ENCODE measurements at regions of chr1 and their contacts with region 1.

Region 1: DNA sequence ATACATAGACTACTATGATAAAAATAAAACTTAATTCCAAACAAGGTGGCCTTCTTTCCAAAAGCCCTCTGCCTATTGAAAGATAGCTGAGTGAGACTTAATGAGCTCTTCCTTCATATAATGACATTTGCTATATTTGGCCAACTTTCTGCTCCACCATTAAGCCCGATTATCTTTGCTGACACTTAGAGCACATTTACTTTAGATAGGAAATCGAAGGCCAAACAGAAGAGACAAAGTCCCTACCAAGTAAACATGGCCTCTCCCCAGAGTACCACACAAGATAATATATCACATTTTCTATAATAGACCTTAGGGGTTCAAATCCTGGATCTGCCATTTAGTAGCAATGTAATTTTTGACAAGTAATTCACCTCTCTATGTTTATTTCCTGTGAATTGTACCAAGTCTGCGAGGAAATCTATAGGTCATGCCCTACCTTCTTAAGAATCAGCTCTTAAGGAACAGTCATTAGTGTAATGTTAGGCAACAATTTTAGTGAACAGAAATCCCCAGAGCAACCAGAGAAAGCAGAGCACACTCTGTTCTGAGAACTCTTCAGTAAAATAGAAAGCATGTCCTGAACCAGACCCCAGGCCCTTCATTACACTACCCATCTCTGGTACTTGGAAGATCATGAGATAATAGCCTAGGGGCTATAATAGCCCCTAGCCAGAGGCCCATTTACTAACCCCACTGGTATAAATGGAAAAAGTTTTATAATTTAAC is 17.3 kb upstream of the COA6 start:
- DNase-seq: no peak
- H3K4me3 Mint-ChIP-seq: peak overlapping the region; percentile 86
- H3K27ac Mint-ChIP-seq: peak overlapping the region; percentile 89
- H3K4me1 Mint-ChIP-seq: peaks cover 12% of the 10 kb centered on the region
- H3K27me3 Mint-ChIP-seq: no peaks in the 10 kb centered on the region
- CTCF ChIP-seq: no peak

Region 2: GRCh38 chr1:232813760-232814159 is 1542.2 kb before region 1 on chr1:
- CTCF ChIA-PET with region 1: no interaction called
- POLR2A ChIA-PET with region 1: no interaction called
- intact Hi-C with region 1: no loop called
- DNase-seq: no peak
- H3K4me3 Mint-ChIP-seq: no peak overlapping the region
- H3K27ac Mint-ChIP-seq: no peak overlapping the region
- H3K4me1 Mint-ChIP-seq: no peaks in the 10 kb centered on the region
- H3K27me3 Mint-ChIP-seq: no peaks in the 10 kb centered on the region
- CTCF ChIP-seq: no peak

Region 3: DNA sequence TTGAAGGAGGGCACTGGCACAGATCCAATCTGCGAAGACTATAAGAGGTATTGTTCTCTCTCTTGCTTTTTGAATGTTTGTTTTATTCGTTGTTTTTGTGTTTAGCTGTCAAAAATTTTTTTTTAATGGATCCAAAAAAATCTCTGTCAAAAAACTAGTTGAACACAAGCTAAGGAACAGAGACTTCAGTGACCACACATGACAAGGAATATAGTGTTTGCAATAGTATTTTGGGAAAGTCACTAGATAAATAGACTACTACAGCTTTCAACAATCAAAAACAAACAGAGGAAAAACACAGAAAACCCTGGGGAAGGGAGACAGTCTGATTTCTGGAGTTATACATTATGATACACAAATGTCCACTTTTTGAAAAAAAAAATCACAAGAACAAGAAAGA is 19.6 kb before region 1 on chr1:
- CTCF ChIA-PET with region 1: interaction called, 3 read pairs
- POLR2A ChIA-PET with region 1: interaction called, 12 read pairs
- intact Hi-C with region 1: no loop called
- DNase-seq: no peak
- H3K4me3 Mint-ChIP-seq: no peak overlapping the region
- H3K27ac Mint-ChIP-seq: no peak overlapping the region
- H3K4me1 Mint-ChIP-seq: peaks cover 8% of the 10 kb centered on the region
- H3K27me3 Mint-ChIP-seq: no peaks in the 10 kb centered on the region
- CTCF ChIP-seq: no peak

Region 4: DNA sequence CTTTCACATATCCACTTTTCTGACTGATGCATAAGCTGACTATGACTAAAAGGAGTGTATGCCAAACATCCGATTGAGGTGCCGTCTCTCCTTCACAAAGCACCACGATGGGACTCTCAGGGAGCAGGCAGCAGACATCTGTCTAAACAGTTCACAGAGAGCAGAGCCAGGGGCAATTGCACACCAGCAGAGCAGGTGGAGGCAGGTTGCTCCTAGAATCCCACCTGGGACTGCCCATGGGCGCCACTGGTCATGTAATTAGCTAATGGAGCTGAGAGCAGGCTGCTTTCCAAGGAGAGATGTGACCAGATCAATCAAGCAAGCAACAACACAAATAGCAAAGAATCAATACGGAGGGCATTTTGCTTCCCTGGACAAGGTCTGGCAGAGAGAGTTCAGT is 13.2 kb before region 1 on chr1:
- CTCF ChIA-PET with region 1: interaction called, 4 read pairs
- POLR2A ChIA-PET with region 1: interaction called, 12 read pairs
- intact Hi-C with region 1: no loop called
- DNase-seq: no peak
- H3K4me3 Mint-ChIP-seq: no peak overlapping the region
- H3K27ac Mint-ChIP-seq: no peak overlapping the region
- H3K4me1 Mint-ChIP-seq: no peaks in the 10 kb centered on the region
- H3K27me3 Mint-ChIP-seq: no peaks in the 10 kb centered on the region
- CTCF ChIP-seq: no peak

Region 5: DNA sequence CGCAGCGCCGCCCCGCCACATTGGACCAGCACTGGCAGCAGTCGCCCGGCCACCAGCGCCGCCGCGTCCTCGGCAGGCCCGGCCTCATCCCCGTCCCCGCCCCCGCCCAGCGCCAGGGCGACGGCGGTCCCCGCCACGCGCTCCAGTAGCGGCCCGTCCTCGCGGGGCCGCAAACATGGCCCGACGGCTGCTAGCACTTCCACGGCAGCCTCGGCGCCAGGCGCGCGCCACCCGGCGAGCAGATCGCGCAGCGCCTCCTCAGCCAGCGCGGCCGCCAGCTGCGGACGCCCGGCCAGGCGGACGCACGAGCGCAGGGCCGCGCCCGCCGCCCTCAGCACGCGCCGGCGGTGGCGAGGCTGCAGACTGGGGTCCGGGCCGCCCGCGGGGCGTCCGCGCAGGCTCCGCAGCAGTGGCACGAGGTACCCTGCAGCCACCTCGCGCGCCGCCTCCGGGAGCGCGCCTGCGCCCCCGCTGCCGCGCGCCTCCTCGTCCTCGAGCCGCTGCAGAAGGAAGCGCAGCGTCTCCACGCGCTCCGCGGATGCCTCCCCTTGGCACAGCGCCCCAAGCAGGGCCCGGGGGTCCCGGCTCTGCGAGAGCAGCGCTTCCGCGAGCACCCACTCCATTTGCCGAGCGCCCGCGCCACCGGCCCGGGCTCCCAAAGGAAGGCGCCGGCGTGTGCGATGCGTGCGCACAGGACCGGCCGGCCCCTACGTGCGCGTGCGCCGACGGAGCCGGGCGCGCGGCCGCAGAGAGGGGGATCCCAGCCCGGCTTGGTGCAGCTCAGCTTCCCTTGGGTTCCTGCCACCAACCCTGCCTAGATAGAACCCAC is 122.7 kb after region 1 on chr1 and contains the start of gene TARBP1:
- CTCF ChIA-PET with region 1: no interaction called
- POLR2A ChIA-PET with region 1: interaction called, 26 read pairs
- intact Hi-C with region 1: no loop called
- DNase-seq: peak; percentile 89
- H3K4me3 Mint-ChIP-seq: peak within 1 kb of the TSS; percentile 77
- H3K27ac Mint-ChIP-seq: no peak within 1 kb of the TSS
- H3K4me1 Mint-ChIP-seq: peaks cover 31% of the 10 kb centered on the region
- H3K27me3 Mint-ChIP-seq: peaks cover 23% of the 10 kb centered on the region
- CTCF ChIP-seq: no peak
- total RNA-seq, gene TARBP1: 45.5 and 52.5 TPM in 2 replicates

Measured in MCF 10A (cell line).